ENCODE measurements at regions of chr19 and their contacts with region 1.

Region 1: GRCh38 chr19:14203177-14203576 is 2.8 kb downstream of the ADGRL1 start:
- DNase-seq: peak in 5 of 42 donors; percentile 15 to 47 (median 31)

Region 2: DNA sequence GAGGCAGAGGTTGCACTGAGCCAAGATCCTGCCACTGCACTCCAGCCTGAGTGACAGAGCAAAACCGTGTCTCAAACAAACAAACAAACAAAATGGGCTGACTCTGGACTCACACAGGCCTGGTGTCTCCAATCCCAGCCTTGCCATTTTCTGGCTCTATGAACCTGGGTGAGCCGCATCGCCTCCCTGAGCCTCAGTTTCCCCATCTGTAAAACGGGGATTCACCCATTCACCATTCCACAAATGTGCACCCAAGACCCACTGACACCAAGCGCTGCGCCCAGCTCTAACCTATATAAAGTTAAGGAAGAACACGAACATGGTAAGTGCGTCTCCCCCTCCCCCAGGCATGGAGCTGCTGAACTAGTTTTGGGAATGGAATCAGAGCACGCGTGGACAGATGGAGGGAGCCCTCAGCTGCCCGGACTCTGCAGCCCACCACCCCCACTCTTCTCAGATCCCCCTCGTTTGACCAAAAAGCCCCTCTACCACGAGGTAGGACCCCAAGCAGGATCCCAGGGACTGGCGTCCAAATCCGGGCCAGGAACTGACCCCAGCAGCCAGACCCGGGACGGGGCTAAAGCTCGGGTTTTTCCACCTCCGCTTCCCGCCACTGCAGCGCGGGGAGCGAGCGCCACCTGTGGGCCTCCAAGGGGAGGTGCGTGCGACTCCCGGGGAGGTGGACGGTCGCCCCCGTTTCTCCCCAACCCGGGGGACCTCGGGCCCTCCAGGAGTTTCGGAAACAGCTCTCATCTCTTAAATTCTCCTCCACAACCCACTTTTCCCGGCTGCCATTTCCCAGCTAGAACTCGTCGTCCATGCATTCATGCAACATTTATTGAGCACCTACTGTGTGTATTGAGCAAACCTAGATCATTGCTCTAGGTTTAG is 145.1 kb after region 1 on chr19:
- intact Hi-C with region 1: loop called (anchors 10 kb)
- DNase-seq: peak in 41 of 42 donors; percentile 22 to 85 (median 67)

Region 3: GRCh38 chr19:14496028-14496833 is 293.1 kb after region 1 on chr19 and contains the start of gene GIPC1:
- intact Hi-C with region 1: loop called (anchors 5 kb)
- DNase-seq: peak; percentile 96 to 100 (median 98)